Right ventricle myocardium inferior (tissue), 1 donor: ENCODE measurements at regions of chr10 and their contacts with region 1.

Region 1: GRCh38 chr10:122953827-122954730 is at the start of gene C10orf88:
- DNase-seq: peak; percentile 97
- ATAC-seq: peak; percentile 99
- total RNA-seq, gene C10orf88: 4.1 TPM

Region 2: GRCh38 chr10:122968698-122969097 is 14.6 kb after region 1 on chr10:
- intact Hi-C with region 1: no loop called
- DNase-seq: no peak
- ATAC-seq: no peak

Region 3: DNA sequence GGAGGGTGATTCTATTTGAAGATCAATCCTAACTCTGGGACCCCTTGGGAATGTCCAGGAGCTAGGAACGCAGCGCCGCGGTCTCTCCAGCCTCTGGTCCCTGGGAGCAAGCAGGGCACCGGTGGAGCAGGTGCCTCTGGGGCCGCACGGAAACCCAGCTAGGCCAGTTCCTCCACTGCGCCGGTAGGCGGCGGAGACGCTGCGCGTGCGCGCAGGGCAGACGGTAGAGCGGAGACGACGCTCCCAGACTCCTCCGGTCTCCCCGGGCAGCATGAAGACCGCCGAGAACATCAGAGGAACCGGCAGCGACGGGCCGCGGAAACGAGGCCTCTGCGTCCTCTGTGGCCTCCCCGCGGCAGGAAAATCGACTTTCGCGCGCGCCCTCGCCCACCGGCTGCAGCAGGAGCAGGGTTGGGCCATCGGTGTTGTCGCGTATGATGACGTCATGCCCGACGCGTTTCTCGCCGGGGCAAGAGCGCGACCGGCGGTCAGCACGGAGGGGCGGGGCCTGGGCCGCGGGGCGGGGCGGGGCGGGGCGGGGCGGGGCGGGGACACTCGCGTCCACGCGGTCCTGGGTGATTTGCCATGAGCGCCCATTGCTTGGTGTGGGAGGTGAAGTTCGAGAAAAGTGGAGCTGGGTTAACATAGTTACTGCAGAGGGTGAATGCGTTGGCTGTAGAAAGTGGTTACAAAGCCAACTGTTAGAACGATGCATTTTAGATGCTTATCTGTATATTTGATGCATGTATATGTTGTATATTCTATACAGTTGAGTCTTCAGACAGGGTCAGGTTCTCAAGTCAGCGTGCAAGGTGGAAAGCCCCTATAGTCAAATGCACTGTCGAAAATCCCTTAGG is 26.4 kb after region 1 on chr10 and contains the start of gene PSTK:
- intact Hi-C with region 1: loop called (anchors 1 kb)
- DNase-seq: peak; percentile 97
- ATAC-seq: peak; percentile 99
- total RNA-seq, gene PSTK: 1.5 TPM

Region 4: GRCh38 chr10:123008439-123009205 is 54.5 kb after region 1 on chr10 and contains the starts of genes ACADSB and IKZF5:
- intact Hi-C with region 1: loop called (anchors 5 kb)
- DNase-seq: peak; percentile 97
- ATAC-seq: peak; percentile 99
- total RNA-seq, gene ACADSB: 72.9 TPM
- total RNA-seq, gene IKZF5: 12.0 TPM